A549 (cell line): ENCODE measurements at regions of chr9 and their contacts with region 1.

Region 1: GRCh38 chr9:36317764-36318163 is 59.5 kb upstream of the GNE start:
- DNase-seq: peak; percentile 64 to 95
- ATAC-seq: peak; percentile 53 to 55
- H3K4me3 ChIP-seq: no peak overlapping the region
- H3K27ac ChIP-seq: peak overlapping the region; percentile 87 to 99
- H3K4me1 ChIP-seq: peaks cover 64% of the 10 kb centered on the region
- CTCF ChIP-seq: no peak
- EP300 ChIP-seq: peak in 1 of 2 experiments; percentile 40; a peak in 2 of 5 replicates
- POLR2A ChIP-seq: no peak
- RAD21 ChIP-seq: no peak; a peak in 1 of 5 replicates

Region 2: DNA sequence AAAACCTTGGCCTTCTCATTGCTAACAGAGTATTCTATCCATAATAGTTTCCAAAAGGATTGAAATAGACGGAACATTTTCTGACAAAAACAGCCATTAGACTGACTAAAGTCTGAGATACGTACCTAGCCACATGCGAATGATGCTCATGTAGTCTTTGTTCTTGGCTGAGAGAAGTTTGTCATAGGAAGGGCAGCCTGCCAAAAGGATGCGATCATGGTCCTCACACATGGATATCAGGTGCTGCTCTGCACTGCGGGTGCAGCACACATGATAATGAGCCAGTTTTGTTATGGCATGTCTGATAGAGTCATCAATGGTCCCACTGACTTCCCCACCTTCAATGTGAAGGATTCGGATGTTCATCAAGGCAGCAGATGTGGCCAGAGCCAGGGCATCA is 71.9 kb before region 1 on chr9:
- CTCF ChIA-PET with region 1: interaction called, 221 read pairs
- POLR2A ChIA-PET with region 1: no interaction called
- DNase-seq: no peak
- ATAC-seq: no peak
- H3K4me3 ChIP-seq: no peak overlapping the region
- H3K27ac ChIP-seq: no peak overlapping the region
- H3K4me1 ChIP-seq: peaks cover 15% of the 10 kb centered on the region; the same call in 2 of the 3 replicates
- CTCF ChIP-seq: no peak
- EP300 ChIP-seq: no peak
- POLR2A ChIP-seq: no peak
- RAD21 ChIP-seq: no peak

Region 3: GRCh38 chr9:36258208-36258988 is 59.4 kb before region 1 on chr9 and contains the start of gene GNE:
- CTCF ChIA-PET with region 1: interaction called, 221 read pairs
- POLR2A ChIA-PET with region 1: interaction called, 40 read pairs
- DNase-seq: peak; percentile 83 to 96
- ATAC-seq: peak; percentile 92 to 93
- H3K4me3 ChIP-seq: peak within 1 kb of the TSS; percentile 89
- H3K27ac ChIP-seq: peak within 1 kb of the TSS; percentile 97
- H3K4me1 ChIP-seq: peaks cover 6% of the 10 kb centered on the region
- CTCF ChIP-seq: no peak
- EP300 ChIP-seq: no peak
- POLR2A ChIP-seq: peak; percentile 92
- RAD21 ChIP-seq: peak in 1 of 2 experiments; percentile 12; a peak in 1 of 5 replicates
- polyA plus RNA-seq, gene GNE: 32.9 and 39.5 TPM in 2 replicates

Region 4: GRCh38 chr9:36293919-36294317 is 23.8 kb before region 1 on chr9:
- CTCF ChIA-PET with region 1: no interaction called
- POLR2A ChIA-PET with region 1: no interaction called
- DNase-seq: no peak
- ATAC-seq: no peak
- H3K4me3 ChIP-seq: no peak overlapping the region
- H3K27ac ChIP-seq: no peak overlapping the region
- H3K4me1 ChIP-seq: peaks cover 16% of the 10 kb centered on the region
- CTCF ChIP-seq: no peak
- EP300 ChIP-seq: no peak
- POLR2A ChIP-seq: no peak
- RAD21 ChIP-seq: no peak

Region 5: DNA sequence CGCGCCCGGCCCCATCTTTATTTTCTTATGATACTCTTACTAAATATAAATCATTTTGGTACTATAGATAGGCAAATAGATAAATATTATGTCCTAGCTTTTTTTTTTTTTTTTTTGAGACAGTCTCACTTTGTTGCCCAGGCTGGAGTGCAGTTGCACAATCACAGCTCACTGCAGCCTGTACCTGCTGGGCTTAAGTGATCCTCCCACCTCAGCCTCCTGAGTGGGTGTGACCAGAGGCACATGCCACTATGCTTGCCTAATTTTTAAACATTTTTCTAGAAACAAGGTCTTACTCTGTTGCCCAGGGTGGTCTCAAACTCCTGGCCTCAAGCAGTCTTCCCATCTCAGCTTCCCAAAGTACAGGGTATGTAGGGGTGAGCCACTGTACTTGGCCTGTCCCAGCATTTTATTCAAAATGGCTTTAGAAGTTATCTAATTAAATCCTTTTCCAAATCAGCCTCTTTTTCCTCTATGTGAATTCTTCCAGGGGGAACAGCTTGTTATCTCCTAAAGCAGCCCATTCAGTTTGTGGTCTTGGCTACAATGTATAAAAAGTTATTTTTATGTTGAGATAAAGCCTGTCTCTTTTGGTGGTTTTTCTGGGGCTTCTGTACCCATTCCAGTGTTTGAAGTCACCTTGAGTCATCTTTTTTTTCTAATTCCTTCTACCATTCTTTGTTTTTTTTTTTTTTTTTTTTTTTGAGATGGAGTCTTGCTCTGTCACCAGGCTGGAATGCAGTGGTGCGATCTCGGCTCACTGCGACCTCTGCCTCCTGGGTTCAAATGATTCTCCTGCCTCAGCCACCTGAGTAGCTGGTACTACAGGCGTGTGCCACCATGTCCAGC is 267.1 kb after region 1 on chr9:
- CTCF ChIA-PET with region 1: no interaction called
- POLR2A ChIA-PET with region 1: interaction called, 10 read pairs
- DNase-seq: no peak
- ATAC-seq: peak; percentile 56 to 62; a peak in 4 of 6 replicates
- H3K4me3 ChIP-seq: no peak overlapping the region
- H3K27ac ChIP-seq: peak overlapping the region; percentile 42 to 75; a peak in 5 of 6 replicates
- H3K4me1 ChIP-seq: peaks cover 14% of the 10 kb centered on the region
- CTCF ChIP-seq: no peak
- EP300 ChIP-seq: no peak
- POLR2A ChIP-seq: no peak
- RAD21 ChIP-seq: no peak